Activated CD8-positive, alpha-beta T cell treated with anti-CD3 and anti-CD28 coated beads, Interleukin-2, amount 10 ng/mL, durations not matched to agents 7 days and 5 days (primary cell): ENCODE measurements at regions of chr6 and their contacts with region 1.

Region 1: DNA sequence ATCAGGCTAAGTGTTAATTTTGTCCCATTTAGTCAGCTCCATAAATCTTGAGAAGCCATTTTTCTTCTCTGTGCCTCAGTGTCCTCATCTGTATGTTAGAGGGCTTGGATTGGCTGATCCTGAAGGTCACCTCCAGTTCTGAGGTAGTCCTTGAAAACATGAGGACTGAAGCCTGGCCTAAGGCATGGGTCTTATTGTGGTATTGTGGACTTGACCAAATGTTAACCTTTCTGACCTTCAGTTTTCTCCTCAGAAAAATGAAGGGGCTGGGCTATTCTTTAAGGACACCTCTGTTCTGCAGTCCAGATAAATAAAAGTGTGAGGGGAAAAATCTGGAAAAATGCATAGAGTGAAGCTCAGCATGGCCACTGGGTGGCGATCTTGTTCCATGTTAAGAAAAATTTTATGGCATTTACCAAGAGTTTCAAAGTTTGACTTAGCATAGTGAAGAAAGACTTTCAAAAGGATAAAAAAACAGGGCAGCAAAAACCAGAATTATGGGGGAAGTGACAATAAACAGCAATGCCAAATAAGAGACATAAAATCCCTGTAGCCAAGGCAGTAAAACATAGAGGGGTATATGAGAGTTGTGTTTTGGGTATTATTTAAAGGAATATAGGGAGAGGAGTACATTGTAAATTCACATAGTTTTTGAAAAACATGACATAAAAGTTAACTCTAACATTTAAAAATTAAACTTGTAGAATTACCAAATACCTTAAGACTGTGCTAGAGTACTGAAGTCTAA is 13.2 kb upstream of the TFB1M start:
- DNase-seq: peak; percentile 71
- ATAC-seq: peak; percentile 47
- H3K4me3 Mint-ChIP-seq: no peak overlapping the region
- H3K27ac Mint-ChIP-seq: no peak overlapping the region
- H3K4me1 Mint-ChIP-seq: peaks cover 15% of the 10 kb centered on the region
- H3K27me3 Mint-ChIP-seq: peaks cover 2% of the 10 kb centered on the region

Region 2: GRCh38 chr6:155314092-155314772 is 13.3 kb before region 1 on chr6 and contains the start of gene TFB1M:
- CTCF ChIA-PET with region 1: interaction called, 40 read pairs
- POLR2A ChIA-PET with region 1: no interaction called
- DNase-seq: peak; percentile 99
- ATAC-seq: peak; percentile 97
- H3K4me3 Mint-ChIP-seq: peak within 1 kb of the TSS; percentile 98
- H3K27ac Mint-ChIP-seq: peak within 1 kb of the TSS; percentile 97
- H3K4me1 Mint-ChIP-seq: peaks cover 35% of the 10 kb centered on the region
- H3K27me3 Mint-ChIP-seq: peaks cover 5% of the 10 kb centered on the region
- total RNA-seq, gene TFB1M: 34.9 to 35.1 TPM

Region 3: GRCh38 chr6:155340464-155341129 is 13.1 kb after region 1 on chr6:
- CTCF ChIA-PET with region 1: interaction called, 18 read pairs
- POLR2A ChIA-PET with region 1: no interaction called
- DNase-seq: no peak
- ATAC-seq: no peak
- H3K4me3 Mint-ChIP-seq: no peak overlapping the region
- H3K27ac Mint-ChIP-seq: no peak overlapping the region
- H3K4me1 Mint-ChIP-seq: peaks cover 33% of the 10 kb centered on the region
- H3K27me3 Mint-ChIP-seq: no peaks in the 10 kb centered on the region

Region 4: DNA sequence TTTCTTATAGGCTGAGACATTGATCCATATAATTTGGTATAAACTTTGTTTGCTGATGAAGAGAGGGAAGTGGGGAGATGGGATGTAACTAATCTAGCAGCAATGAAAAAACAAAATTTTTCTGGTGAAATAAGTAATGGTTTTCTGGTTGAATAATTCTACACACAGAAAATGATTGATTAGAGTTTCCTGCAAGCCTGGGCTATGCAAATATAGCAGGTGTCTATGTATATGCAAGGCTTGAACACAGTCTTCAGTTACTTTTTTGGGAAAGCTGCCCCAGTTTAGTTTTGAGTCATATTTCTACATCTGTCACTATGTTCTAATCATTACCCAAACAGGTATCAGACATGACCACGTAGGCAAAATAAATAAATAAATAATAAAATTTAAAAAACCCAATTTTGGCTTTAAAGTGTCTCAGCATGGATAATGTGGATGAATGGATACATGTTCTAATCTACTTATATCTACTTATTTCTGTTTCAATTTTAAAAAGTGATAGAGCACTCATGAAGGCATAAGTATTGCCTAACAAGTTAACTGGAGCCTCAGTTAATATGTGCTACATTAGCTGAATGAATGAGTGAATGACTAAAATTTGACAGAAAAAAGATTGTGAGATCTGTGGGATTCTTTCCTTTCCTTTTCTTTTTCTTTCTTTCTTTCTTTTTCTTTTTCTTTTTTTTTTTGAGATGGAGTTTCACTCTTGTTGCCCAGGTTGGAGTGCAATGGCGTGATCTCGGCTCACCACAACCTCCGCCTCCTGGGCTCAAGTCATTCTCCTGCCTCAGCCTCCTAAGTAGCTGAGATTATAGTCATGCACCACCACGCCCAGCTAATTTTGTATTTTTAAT is 24.0 kb after region 1 on chr6:
- CTCF ChIA-PET with region 1: no interaction called
- POLR2A ChIA-PET with region 1: no interaction called
- DNase-seq: no peak
- ATAC-seq: no peak
- H3K4me3 Mint-ChIP-seq: no peak overlapping the region
- H3K27ac Mint-ChIP-seq: no peak overlapping the region
- H3K4me1 Mint-ChIP-seq: no peaks in the 10 kb centered on the region
- H3K27me3 Mint-ChIP-seq: no peaks in the 10 kb centered on the region

Region 5: GRCh38 chr6:155528982-155529453 is 201.5 kb after region 1 on chr6:
- CTCF ChIA-PET with region 1: interaction called, 13 read pairs
- POLR2A ChIA-PET with region 1: no interaction called
- DNase-seq: no peak
- ATAC-seq: peak; percentile 39
- H3K4me3 Mint-ChIP-seq: no peak overlapping the region
- H3K27ac Mint-ChIP-seq: no peak overlapping the region
- H3K4me1 Mint-ChIP-seq: peaks cover 8% of the 10 kb centered on the region
- H3K27me3 Mint-ChIP-seq: no peaks in the 10 kb centered on the region